Uterus (tissue), 4 donors: ENCODE measurements at regions of chr17 and their contacts with region 1.

Region 1: GRCh38 chr17:38579934-38580333 is 25.8 kb downstream of the SRCIN1 start:
- DNase-seq: peak in 1 of 2 donors; percentile 24
- H3K4me3 ChIP-seq: no peak overlapping the region
- H3K27ac ChIP-seq: no peak overlapping the region
- H3K4me1 ChIP-seq: no peaks in the 10 kb centered on the region
- H3K27me3 ChIP-seq: peaks cover 0 to 19% of the 10 kb centered on the region in 2 donors
- CTCF ChIP-seq: no peak
- POLR2A ChIP-seq: no peak

Region 2: DNA sequence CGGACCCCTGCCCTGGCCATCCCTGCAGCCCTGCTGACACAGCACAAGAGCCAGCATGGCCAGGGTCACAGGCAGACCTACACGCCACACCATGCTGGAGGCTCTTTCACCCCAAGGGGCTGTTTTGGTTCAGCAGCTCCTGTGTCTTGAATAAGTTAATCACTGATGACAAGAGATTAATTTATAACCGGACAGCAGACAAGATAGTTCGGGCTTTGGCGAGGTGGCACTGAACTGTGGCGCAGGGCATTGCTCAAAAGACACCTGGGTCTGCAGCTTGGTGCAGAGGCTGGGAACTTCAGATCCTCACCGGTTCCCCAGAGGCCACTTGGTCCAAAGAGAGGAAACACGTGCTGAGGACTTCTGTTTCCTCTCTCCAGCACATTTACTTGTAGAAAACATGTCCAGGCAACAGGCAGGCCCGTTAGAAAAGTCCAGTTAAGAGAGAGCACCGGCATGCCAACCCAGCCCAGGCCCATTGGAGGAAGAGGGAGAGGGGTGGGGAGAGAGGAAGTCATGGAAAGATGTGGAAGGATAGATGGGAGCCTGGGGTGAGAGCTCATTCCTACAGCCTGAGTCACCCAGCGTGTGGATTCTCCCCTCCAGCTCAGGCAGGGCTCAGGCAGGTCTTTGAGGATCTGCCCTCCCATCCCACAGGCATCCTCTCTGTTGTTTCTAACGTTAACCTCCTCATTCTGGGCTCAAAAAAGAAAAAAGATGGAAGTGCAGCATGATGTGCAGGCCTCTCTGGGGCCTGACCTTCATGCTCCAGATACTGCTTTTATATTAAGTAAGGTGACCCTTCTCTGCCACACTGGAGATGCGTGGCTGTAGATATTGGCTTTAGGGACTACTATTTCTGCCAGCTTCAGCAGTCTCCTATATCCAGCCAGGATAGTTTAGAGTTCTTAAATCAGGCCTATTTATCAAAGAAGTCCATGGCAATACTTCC is 755.1 kb before region 1 on chr17:
- intact Hi-C with region 1: no loop called
- DNase-seq: no peak
- H3K4me3 ChIP-seq: no peak overlapping the region
- H3K27ac ChIP-seq: no peak overlapping the region
- H3K4me1 ChIP-seq: no peaks in the 10 kb centered on the region
- H3K27me3 ChIP-seq: no peaks in the 10 kb centered on the region
- CTCF ChIP-seq: no peak
- POLR2A ChIP-seq: no peak

Region 3: GRCh38 chr17:38636054-38636453 is 56.1 kb after region 1 on chr17:
- intact Hi-C with region 1: no loop called
- DNase-seq: no peak
- H3K4me3 ChIP-seq: no peak overlapping the region
- H3K27ac ChIP-seq: no peak overlapping the region
- H3K4me1 ChIP-seq: no peaks in the 10 kb centered on the region
- H3K27me3 ChIP-seq: no peaks in the 10 kb centered on the region
- CTCF ChIP-seq: no peak
- POLR2A ChIP-seq: no peak

Region 4: GRCh38 chr17:38667099-38667786 is 87.3 kb after region 1 on chr17:
- intact Hi-C with region 1: loop called (anchors 10 kb)
- DNase-seq: peak; percentile 58 to 63
- H3K4me3 ChIP-seq: no peak overlapping the region
- H3K27ac ChIP-seq: no peak overlapping the region
- H3K4me1 ChIP-seq: no peaks in the 10 kb centered on the region
- H3K27me3 ChIP-seq: no peaks in the 10 kb centered on the region
- CTCF ChIP-seq: peak; percentile 94 to 99 (median 98)
- POLR2A ChIP-seq: no peak